MCF 10A (cell line): ENCODE measurements at regions of chr3 and their contacts with region 1.

Region 1: GRCh38 chr3:198080521-198081280 is 120.7 kb downstream of the LMLN start:
- DNase-seq: peak; percentile 69
- H3K4me3 Mint-ChIP-seq: peak overlapping the region; percentile 65
- H3K27ac Mint-ChIP-seq: no peak overlapping the region
- H3K4me1 Mint-ChIP-seq: no peaks in the 10 kb centered on the region
- H3K27me3 Mint-ChIP-seq: peaks cover 73% of the 10 kb centered on the region
- CTCF ChIP-seq: peak; percentile 60

Region 2: GRCh38 chr3:197567904-197568681 is 512.6 kb before region 1 on chr3:
- CTCF ChIA-PET with region 1: no interaction called
- POLR2A ChIA-PET with region 1: no interaction called
- intact Hi-C with region 1: no loop called
- DNase-seq: no peak
- H3K4me3 Mint-ChIP-seq: no peak overlapping the region
- H3K27ac Mint-ChIP-seq: no peak overlapping the region
- H3K4me1 Mint-ChIP-seq: no peaks in the 10 kb centered on the region
- H3K27me3 Mint-ChIP-seq: no peaks in the 10 kb centered on the region
- CTCF ChIP-seq: no peak

Region 3: DNA sequence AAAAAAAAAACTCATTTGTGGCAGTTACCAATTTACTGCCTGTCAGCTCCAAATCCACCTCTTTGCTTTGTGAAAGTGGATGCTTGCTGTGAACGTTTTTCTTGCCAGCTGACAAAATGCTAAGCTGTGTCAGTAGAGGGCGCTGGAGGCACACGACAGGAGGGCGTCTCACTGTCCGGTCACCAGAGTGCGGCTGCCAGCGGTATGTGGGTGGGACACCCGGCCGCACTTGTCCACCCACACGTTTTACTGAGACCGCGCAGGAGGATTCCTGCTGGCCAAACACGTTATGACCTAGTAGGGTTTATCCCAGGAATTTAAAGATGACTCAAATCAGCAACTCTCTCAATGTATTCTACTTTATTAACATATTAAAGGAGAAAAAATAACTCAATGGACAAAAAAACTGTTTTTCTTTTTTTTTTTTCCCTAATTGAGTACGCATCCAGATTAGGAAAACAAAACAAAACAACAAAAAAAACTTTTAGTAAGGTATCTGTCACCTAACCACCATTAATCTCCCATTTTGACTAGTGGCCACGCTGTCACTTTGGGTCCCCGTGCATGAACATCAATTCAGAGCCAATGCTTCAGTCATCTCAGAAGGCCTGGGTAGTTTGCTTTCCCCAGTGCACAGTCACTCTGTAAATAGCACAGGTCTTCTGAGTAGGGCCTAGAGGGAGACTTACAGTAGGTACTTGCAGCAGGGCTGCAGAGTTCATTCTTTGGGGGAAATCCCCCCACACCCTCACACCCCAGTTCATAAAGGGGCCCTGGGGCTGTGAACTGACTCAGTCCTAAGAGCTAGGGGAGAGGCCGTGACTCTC is 174.5 kb before region 1 on chr3:
- CTCF ChIA-PET with region 1: interaction called, 4 read pairs
- POLR2A ChIA-PET with region 1: no interaction called
- intact Hi-C with region 1: loop called (anchors 1 kb)
- DNase-seq: peak; percentile 88
- H3K4me3 Mint-ChIP-seq: no peak overlapping the region
- H3K27ac Mint-ChIP-seq: peak overlapping the region; percentile 53
- H3K4me1 Mint-ChIP-seq: no peaks in the 10 kb centered on the region
- H3K27me3 Mint-ChIP-seq: no peaks in the 10 kb centered on the region
- CTCF ChIP-seq: peak; percentile 89

Region 4: DNA sequence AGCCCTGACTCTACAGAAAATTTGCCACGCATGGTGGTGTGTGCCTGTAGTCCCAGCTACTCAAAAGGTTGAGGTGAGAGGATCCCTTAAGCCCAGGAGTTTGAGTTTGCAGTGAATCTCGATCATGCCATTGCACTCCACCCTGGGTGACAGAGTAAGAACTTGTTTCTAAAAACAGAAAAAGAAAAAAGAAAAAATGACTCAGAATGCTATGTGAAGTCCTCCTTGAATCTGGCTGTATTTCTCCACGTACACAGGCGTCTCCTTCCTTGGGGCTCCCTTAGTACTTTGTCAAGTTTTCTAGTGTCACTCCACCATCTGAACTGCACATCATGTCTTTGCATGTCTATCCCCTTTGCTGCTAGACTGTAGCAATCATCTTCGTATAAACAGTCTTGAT is 16.3 kb before region 1 on chr3:
- CTCF ChIA-PET with region 1: interaction called, 25 read pairs
- POLR2A ChIA-PET with region 1: interaction called, 3 read pairs
- intact Hi-C with region 1: no loop called
- DNase-seq: no peak
- H3K4me3 Mint-ChIP-seq: no peak overlapping the region
- H3K27ac Mint-ChIP-seq: no peak overlapping the region
- H3K4me1 Mint-ChIP-seq: no peaks in the 10 kb centered on the region
- H3K27me3 Mint-ChIP-seq: peaks cover 68% of the 10 kb centered on the region
- CTCF ChIP-seq: no peak

Region 5: GRCh38 chr3:198093112-198093679 is 12.5 kb after region 1 on chr3:
- CTCF ChIA-PET with region 1: interaction called, 12 read pairs
- POLR2A ChIA-PET with region 1: no interaction called
- intact Hi-C with region 1: no loop called
- DNase-seq: no peak
- H3K4me3 Mint-ChIP-seq: no peak overlapping the region
- H3K27ac Mint-ChIP-seq: no peak overlapping the region
- H3K4me1 Mint-ChIP-seq: no peaks in the 10 kb centered on the region
- H3K27me3 Mint-ChIP-seq: peaks cover 81% of the 10 kb centered on the region
- CTCF ChIP-seq: no peak